ENCODE measurements at regions of chr6 and their contacts with region 1.

Region 1: DNA sequence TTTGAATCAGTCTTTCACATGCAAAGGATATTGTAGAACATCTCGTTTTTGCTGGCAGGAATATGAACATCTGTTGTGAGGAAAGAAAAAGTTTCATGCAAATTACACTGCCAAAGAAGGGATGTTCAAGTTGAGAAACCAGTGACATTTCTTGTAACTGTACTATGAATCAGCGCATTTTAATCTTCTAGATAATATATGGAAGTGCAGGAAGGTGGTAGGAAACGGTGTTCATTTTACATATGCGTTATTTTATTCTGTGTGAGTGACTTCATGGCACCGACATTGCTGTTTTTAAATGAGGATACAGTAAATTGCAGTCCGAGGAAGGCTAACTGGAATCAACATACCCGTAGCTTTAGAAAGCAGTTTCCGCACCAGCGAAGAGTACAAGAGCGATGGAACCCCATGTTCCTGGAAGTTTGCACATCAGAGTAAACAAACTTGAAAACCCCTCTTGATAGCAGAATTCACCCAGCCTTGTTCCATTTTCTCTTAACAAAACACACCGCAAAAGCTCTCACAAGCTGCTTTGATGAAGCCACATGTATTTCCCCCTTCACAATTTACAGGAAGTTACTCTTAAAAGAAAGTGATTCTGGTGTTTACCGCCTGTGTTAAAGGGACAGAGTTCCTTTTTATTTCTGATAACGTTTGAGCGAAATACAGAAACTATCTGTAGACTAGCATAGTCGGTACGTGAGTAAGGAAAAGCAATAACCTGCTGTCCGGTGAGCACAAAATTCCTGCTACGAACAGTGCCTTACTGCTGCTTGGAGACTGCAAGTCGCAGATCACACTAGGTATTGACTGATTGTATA is 11.5 kb downstream of the PRDM1 start:
- DNase-seq: peak; percentile 92
- H3K4me3 Mint-ChIP-seq: peak overlapping the region; percentile 91
- H3K27ac Mint-ChIP-seq: peak overlapping the region; percentile 97
- H3K4me1 Mint-ChIP-seq: peaks cover 75% of the 10 kb centered on the region
- H3K27me3 Mint-ChIP-seq: no peaks in the 10 kb centered on the region

Region 2: GRCh38 chr6:105733565-105734162 is 364.0 kb before region 1 on chr6:
- intact Hi-C with region 1: loop called (anchors 5 kb)
- DNase-seq: no peak
- H3K4me3 Mint-ChIP-seq: no peak overlapping the region
- H3K27ac Mint-ChIP-seq: no peak overlapping the region
- H3K4me1 Mint-ChIP-seq: peaks cover 17% of the 10 kb centered on the region
- H3K27me3 Mint-ChIP-seq: peaks cover 2% of the 10 kb centered on the region

Region 3: DNA sequence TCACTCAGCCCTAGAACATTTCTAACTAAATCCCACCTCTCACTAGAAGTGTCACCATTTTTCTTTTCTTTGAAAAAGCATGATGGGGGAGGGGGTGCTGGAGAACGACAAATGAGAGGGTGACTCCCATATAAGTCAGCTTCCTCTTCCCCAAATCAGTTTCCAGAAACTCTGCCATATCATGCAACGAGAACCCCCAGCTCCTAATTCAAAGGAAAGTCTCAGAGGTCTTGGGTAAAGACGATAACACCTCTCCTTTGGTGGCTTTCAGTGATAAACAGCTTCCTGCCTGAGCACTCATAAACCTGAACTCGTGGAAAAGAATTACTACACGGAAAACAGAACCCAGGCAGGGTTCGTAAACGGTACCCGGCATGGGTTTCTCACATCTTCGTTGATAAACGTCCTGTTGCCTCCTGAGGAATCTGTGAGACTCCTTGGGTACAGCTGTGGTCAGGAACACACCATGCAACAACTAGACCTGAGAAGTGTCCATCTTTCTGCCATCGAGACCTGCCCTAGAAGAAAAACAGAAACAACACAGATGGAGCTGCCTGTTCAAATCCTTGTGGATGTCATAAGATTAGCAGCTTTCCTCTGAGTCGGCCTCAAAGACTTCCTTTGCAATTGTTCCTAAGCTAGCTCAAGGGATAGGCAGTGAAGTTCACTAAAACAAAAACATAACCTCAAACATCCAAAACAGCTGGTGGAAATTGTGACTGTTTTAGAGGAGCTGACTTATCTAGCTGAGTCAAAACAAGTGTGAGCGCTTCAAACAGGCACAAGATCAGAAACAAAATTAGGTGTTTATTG is 197.3 kb before region 1 on chr6:
- intact Hi-C with region 1: loop called (anchors 1 kb)
- DNase-seq: peak; percentile 83
- H3K4me3 Mint-ChIP-seq: peak overlapping the region; percentile 75
- H3K27ac Mint-ChIP-seq: peak overlapping the region; percentile 95
- H3K4me1 Mint-ChIP-seq: peaks cover 26% of the 10 kb centered on the region
- H3K27me3 Mint-ChIP-seq: no peaks in the 10 kb centered on the region

Region 4: GRCh38 chr6:106114492-106115265 is 17.1 kb after region 1 on chr6:
- intact Hi-C with region 1: loop called (anchors 1 kb)
- DNase-seq: peak; percentile 81
- H3K4me3 Mint-ChIP-seq: peak overlapping the region; percentile 36
- H3K27ac Mint-ChIP-seq: peak overlapping the region; percentile 88
- H3K4me1 Mint-ChIP-seq: peaks cover 74% of the 10 kb centered on the region
- H3K27me3 Mint-ChIP-seq: no peaks in the 10 kb centered on the region

Region 5: GRCh38 chr6:106223300-106223930 is 125.8 kb after region 1 on chr6:
- intact Hi-C with region 1: loop called (anchors 2 kb)
- DNase-seq: peak; percentile 91
- H3K4me3 Mint-ChIP-seq: no peak overlapping the region
- H3K27ac Mint-ChIP-seq: no peak overlapping the region
- H3K4me1 Mint-ChIP-seq: peaks cover 32% of the 10 kb centered on the region
- H3K27me3 Mint-ChIP-seq: no peaks in the 10 kb centered on the region